ENCODE measurements at regions of chr1 and their contacts with region 1.

Region 1: DNA sequence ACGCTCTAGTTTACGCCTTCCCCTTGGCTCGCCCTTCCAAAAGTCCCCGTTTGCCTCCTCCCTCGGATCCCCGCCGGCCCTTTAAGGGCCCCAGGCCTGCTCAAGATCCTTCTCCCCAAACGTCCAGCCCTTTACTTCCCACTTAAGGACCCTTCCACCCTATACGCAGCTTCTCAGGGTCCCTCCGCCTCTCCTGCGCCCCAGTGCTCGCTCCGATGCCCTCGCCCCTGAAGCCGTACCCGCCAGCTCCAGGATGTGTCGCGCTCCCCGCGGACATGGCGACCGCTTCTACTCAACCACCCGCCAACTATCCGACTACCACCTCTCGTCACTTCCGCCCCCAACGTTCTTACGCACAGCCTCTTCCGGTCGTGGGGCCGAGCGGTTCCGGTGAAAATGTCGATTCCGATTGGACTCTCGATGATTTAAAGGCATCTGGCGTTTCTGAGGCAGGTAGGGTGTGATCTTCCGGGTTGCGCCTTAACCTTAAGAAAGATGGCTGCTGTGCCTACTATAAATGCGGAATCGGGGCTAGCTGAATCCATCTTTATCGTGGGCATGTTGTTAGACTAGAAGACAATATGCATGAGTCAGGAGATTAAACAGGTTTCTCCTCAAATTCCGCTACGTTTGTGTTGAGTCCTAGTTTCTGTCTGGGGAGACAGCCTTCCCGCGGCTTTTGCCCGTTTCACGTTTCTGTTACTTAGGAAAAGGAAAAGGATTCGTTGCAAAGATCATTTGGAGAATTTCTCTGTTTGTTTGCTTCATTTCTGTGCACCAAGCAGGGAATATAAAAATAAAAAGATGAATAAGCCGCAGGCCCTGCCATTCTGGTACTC is at the start of gene KHDC4:
- DNase-seq: peak; percentile 98
- ATAC-seq: peak; percentile 95
- H3K4me3 Mint-ChIP-seq: no peak within 1 kb of the TSS
- H3K27ac Mint-ChIP-seq: no peak within 1 kb of the TSS
- H3K4me1 Mint-ChIP-seq: peaks cover 38% of the 10 kb centered on the region
- H3K27me3 Mint-ChIP-seq: no peaks in the 10 kb centered on the region
- CTCF ChIP-seq: no peak
- total RNA-seq, gene KHDC4: 68.1 to 71.3 TPM

Region 2: GRCh38 chr1:155920717-155921116 is 13.6 kb before region 1 on chr1:
- CTCF ChIA-PET with region 1: interaction called, 9 read pairs
- POLR2A ChIA-PET with region 1: interaction called, 35 read pairs
- intact Hi-C with region 1: no loop called
- DNase-seq: no peak
- ATAC-seq: no peak
- H3K4me3 Mint-ChIP-seq: no peak overlapping the region
- H3K27ac Mint-ChIP-seq: no peak overlapping the region
- H3K4me1 Mint-ChIP-seq: no peaks in the 10 kb centered on the region
- H3K27me3 Mint-ChIP-seq: no peaks in the 10 kb centered on the region
- CTCF ChIP-seq: no peak

Region 3: GRCh38 chr1:155951753-155952504 is 17.6 kb after region 1 on chr1:
- CTCF ChIA-PET with region 1: interaction called, 8 read pairs
- POLR2A ChIA-PET with region 1: interaction called, 11 read pairs
- intact Hi-C with region 1: no loop called
- DNase-seq: no peak
- ATAC-seq: no peak
- H3K4me3 Mint-ChIP-seq: no peak overlapping the region
- H3K27ac Mint-ChIP-seq: peak overlapping the region; percentile 30
- H3K4me1 Mint-ChIP-seq: peaks cover 18% of the 10 kb centered on the region
- H3K27me3 Mint-ChIP-seq: no peaks in the 10 kb centered on the region
- CTCF ChIP-seq: no peak

Region 4: GRCh38 chr1:155978325-155978972 is 44.1 kb after region 1 on chr1 and contains the start of gene ARHGEF2:
- CTCF ChIA-PET with region 1: interaction called, 121 read pairs
- POLR2A ChIA-PET with region 1: interaction called, 128 read pairs
- intact Hi-C with region 1: no loop called
- DNase-seq: peak; percentile 93
- ATAC-seq: peak; percentile 68
- H3K4me3 Mint-ChIP-seq: peak within 1 kb of the TSS; percentile 98
- H3K27ac Mint-ChIP-seq: peak within 1 kb of the TSS; percentile 94
- H3K4me1 Mint-ChIP-seq: peaks cover 67% of the 10 kb centered on the region
- H3K27me3 Mint-ChIP-seq: no peaks in the 10 kb centered on the region
- CTCF ChIP-seq: peak; percentile 19
- total RNA-seq, gene ARHGEF2: 147 to 150 TPM

Region 5: DNA sequence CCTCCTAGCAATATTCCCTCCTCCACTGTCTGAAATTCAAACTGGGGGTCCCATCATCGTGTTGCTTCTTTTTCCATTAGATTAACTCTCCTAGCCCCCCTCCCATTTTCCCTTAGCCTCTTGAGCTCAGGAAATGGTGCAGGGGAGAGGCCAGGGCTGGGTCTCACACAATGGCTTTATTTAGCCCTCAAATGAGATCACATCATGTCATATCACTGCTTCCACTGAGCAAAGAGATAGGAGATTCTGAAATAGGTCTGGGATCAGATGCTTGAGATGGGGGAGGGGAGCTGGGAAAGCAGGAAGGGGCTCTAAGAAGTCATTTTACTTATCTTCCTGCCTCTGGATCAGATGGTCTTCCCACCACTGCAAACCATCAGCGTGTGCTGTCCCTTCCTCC is 61.9 kb after region 1 on chr1:
- CTCF ChIA-PET with region 1: interaction called, 113 read pairs
- POLR2A ChIA-PET with region 1: interaction called, 3 read pairs
- intact Hi-C with region 1: no loop called
- DNase-seq: no peak
- ATAC-seq: no peak
- H3K4me3 Mint-ChIP-seq: no peak overlapping the region
- H3K27ac Mint-ChIP-seq: no peak overlapping the region
- H3K4me1 Mint-ChIP-seq: no peaks in the 10 kb centered on the region
- H3K27me3 Mint-ChIP-seq: no peaks in the 10 kb centered on the region
- CTCF ChIP-seq: no peak

Region 6: DNA sequence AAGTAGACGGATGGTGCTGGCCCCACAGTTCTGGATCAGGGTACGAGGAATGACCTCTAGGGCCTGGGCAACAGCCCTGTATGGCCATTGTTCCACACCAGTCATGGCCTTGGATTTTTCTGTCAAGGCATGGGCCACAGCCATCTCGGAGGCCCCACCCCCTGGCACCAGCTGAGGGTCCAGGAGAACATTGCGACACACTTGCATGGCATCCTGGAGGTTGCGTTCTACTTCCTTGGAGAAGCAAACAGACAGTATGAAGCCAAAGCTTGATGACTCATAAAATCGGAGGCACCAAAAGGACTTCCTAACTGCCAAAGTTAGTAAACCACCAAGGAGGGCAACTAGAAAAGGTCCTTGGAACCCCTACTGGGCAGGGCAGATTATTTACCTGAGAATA is 376.6 kb after region 1 on chr1:
- CTCF ChIA-PET with region 1: no interaction called
- POLR2A ChIA-PET with region 1: no interaction called
- intact Hi-C with region 1: no loop called
- DNase-seq: no peak
- ATAC-seq: no peak
- H3K4me3 Mint-ChIP-seq: no peak overlapping the region
- H3K27ac Mint-ChIP-seq: no peak overlapping the region
- H3K4me1 Mint-ChIP-seq: no peaks in the 10 kb centered on the region
- H3K27me3 Mint-ChIP-seq: no peaks in the 10 kb centered on the region
- CTCF ChIP-seq: no peak